ENCODE measurements at regions of chrX and their contacts with region 1.

Region 1: DNA sequence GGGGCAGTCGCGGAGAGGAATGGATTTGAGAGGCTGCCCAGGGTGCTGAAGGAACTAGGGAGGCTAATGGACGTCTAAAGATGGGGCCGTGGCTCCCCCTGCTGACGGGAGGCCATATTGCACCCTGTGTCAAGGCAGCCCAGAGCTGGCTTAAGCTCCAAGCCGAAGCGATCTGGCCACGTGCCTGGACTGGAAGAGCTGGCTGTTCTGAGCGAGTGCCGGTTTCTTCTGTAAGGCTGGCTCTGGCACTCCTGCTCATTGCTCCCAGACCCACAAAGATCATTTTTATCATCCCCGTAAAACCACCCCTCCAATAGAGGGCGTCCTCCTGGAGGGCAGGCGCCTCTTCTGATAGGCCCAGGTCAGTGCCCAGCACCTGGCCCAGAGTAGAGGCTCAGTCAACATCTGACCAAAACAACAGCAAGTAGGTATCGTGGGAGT is 5.6 kb downstream of the PNCK start:
- DNase-seq: peak; percentile 63 to 74 (median 67)
- H3K4me3 ChIP-seq: no peak overlapping the region
- H3K4me3 Mint-ChIP-seq: peak overlapping the region; percentile 70 to 90 (median 78)
- H3K27ac ChIP-seq: no peak overlapping the region
- H3K27ac Mint-ChIP-seq: peak overlapping the region in 4 of 7 donors; percentile 37 to 76 (median 66)
- H3K4me1 ChIP-seq: no peaks in the 10 kb centered on the region
- H3K4me1 Mint-ChIP-seq: peaks cover 3 to 14% (median 9%) of the 10 kb centered on the region in 4 donors
- H3K27me3 ChIP-seq: no peaks in the 10 kb centered on the region
- H3K27me3 Mint-ChIP-seq: peaks cover 2 to 9% of the 10 kb centered on the region in 2 donors

Region 2: GRCh38 chrX:152958524-152959465 is 709.2 kb before region 1 on chrX:
- CTCF ChIA-PET with region 1: interaction called, 5 read pairs
- POLR2A ChIA-PET with region 1: no interaction called
- intact Hi-C with region 1: loop called (anchors 1 kb)
- DNase-seq: peak; percentile 90 to 93 (median 93)
- H3K4me3 ChIP-seq: peak overlapping the region in 1 of 2 donors; percentile 28
- H3K4me3 Mint-ChIP-seq: peak overlapping the region; percentile 39 to 86 (median 77)
- H3K27ac ChIP-seq: peak overlapping the region; percentile 31
- H3K27ac Mint-ChIP-seq: peak overlapping the region; percentile 84 to 96 (median 94)
- H3K4me1 ChIP-seq: peaks cover 7% of the 10 kb centered on the region
- H3K4me1 Mint-ChIP-seq: peaks cover 3 to 16% (median 7%) of the 10 kb centered on the region in 4 donors
- H3K27me3 ChIP-seq: no peaks in the 10 kb centered on the region
- H3K27me3 Mint-ChIP-seq: no peaks in the 10 kb centered on the region

Region 3: GRCh38 chrX:153539171-153539978 is 128.6 kb before region 1 on chrX:
- CTCF ChIA-PET with region 1: interaction called, 60 read pairs
- POLR2A ChIA-PET with region 1: no interaction called
- intact Hi-C with region 1: loop called (anchors 1 kb)
- DNase-seq: peak; percentile 50 to 58 (median 51)
- H3K4me3 ChIP-seq: no peak overlapping the region
- H3K4me3 Mint-ChIP-seq: no peak overlapping the region
- H3K27ac ChIP-seq: no peak overlapping the region
- H3K27ac Mint-ChIP-seq: no peak overlapping the region
- H3K4me1 ChIP-seq: no peaks in the 10 kb centered on the region
- H3K4me1 Mint-ChIP-seq: no peaks in the 10 kb centered on the region
- H3K27me3 ChIP-seq: no peaks in the 10 kb centered on the region
- H3K27me3 Mint-ChIP-seq: no peaks in the 10 kb centered on the region

Region 4: DNA sequence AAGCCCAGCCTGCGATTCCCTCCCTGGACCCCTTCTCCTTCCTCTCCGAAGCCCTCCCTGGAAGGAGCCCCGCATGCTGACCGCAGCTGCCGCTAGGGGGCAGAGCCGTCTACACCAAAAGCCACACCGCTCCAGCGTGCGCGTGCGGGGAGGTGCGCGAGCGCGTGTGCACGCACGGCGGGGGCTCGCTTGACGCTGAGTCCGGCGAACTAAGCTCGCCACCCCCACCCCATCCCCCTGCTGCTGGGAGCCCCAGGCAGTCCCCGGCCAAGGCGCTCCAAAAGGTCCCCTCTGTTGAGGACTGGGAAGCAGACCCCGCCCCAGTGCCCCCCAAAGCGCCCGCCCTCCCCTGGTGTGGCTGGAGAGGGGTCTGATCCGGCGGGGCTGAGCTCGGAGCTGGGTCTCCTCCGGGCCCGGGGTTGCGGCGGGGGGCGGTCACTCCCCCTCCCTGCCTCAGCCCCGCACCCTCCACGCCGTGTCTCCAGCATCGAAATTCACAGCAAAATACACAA is 58.0 kb before region 1 on chrX:
- CTCF ChIA-PET with region 1: interaction called, 33 read pairs
- POLR2A ChIA-PET with region 1: interaction called, 3 read pairs
- intact Hi-C with region 1: no loop called
- DNase-seq: peak; percentile 72 to 74 (median 73)
- H3K4me3 ChIP-seq: peak overlapping the region in 1 of 2 donors; percentile 38
- H3K4me3 Mint-ChIP-seq: peak overlapping the region; percentile 81 to 90 (median 83)
- H3K27ac ChIP-seq: no peak overlapping the region
- H3K27ac Mint-ChIP-seq: peak overlapping the region in 5 of 7 donors; percentile 46 to 91 (median 82)
- H3K4me1 ChIP-seq: peaks cover 15% of the 10 kb centered on the region
- H3K4me1 Mint-ChIP-seq: peaks cover 4 to 22% (median 11%) of the 10 kb centered on the region in 4 donors
- H3K27me3 ChIP-seq: no peaks in the 10 kb centered on the region
- H3K27me3 Mint-ChIP-seq: no peaks in the 10 kb centered on the region